ENCODE measurements at regions of chr1 and their contacts with region 1.

Region 1: DNA sequence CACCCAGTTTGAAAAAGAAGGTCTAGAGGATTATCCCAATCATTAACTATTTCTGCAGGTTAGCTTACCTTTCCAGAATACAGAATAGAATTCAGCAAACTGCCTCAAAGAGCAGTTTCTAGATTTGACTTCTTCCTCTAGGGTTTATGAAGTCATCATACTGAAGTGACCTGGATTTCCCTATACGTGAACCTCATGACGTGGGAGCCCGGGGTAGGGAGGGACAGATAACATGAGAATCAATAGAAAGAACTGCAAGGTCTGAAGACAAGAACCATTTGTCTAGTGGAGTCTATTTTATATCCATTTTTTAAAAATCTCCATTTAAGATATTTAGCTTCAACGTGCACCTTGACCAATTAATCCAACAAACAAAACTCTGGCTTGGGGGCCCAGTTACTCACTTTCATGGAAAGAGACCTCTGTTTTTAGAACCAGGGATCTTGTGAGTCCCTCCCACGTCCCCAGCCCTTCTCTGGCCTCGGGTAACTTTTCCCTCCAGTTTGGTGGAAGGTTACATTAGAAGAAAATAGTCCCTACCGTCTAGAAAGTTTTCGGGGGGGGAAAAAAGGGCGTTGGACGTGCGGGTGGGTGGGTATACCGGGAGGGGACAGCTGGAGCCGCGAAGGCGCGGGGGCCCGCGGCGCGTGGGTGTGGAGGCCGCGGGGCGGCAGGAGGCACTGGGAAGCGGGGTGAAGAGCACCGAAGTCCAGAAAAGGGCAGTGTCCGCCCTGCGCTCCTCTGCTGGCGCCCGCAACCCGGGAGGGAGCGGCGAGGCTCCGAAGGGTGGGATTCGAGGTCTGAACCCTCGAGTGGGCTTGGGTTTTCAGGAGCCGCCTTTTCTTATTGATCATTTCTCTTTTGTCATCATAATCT is 13.8 kb upstream of the POGZ start:
- DNase-seq: peak; percentile 30 to 38
- H3K4me3 ChIP-seq: peak overlapping the region; percentile 60
- H3K27ac ChIP-seq: no peak overlapping the region
- H3K4me1 ChIP-seq: peaks cover 11% of the 10 kb centered on the region; the same call in 1 of the 2 replicates
- H3K27me3 ChIP-seq: no peaks in the 10 kb centered on the region
- CTCF ChIP-seq: no peak

Region 2: GRCh38 chr1:151568626-151569088 is 95.6 kb after region 1 on chr1:
- CTCF ChIA-PET with region 1: no interaction called
- POLR2A ChIA-PET with region 1: no interaction called
- intact Hi-C with region 1: no loop called
- DNase-seq: peak in 1 of 2 experiments; percentile 83
- H3K4me3 ChIP-seq: no peak overlapping the region
- H3K27ac ChIP-seq: peak overlapping the region; percentile 77
- H3K4me1 ChIP-seq: peaks cover 53% of the 10 kb centered on the region
- H3K27me3 ChIP-seq: no peaks in the 10 kb centered on the region
- CTCF ChIP-seq: no peak

Region 3: DNA sequence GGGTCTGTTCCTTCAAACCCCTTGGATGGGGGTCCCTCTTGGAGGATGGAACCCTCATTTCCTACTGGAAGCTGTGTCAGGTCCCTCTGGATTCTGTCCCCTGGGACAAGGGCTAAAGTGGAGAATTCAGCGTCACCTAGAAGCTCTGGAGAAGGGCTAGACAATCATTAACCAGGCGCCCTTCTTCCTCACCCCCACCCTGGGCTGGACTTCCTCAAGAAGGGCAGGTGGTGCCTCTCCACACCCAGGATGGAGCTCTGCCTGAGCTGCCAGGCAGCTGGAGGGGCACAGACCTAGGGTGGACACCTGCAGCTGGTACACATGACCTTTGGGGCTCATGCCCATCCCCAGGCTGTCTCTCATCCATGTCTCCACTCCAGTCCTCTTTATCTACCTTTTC is 239.9 kb after region 1 on chr1:
- CTCF ChIA-PET with region 1: no interaction called
- POLR2A ChIA-PET with region 1: interaction called, 12 read pairs
- intact Hi-C with region 1: no loop called
- DNase-seq: no peak
- H3K4me3 ChIP-seq: no peak overlapping the region
- H3K27ac ChIP-seq: no peak overlapping the region
- H3K4me1 ChIP-seq: no peaks in the 10 kb centered on the region
- H3K27me3 ChIP-seq: peaks cover 54% of the 10 kb centered on the region
- CTCF ChIP-seq: no peak